ENCODE measurements at regions of chr1 and their contacts with region 1.

Region 1: GRCh38 chr1:204363335-204364124 is 3.8 kb upstream of the PLEKHA6 start:
- DNase-seq: peak; percentile 82
- H3K4me3 ChIP-seq: peak overlapping the region; percentile 69
- H3K27ac ChIP-seq: no peak overlapping the region
- H3K4me1 ChIP-seq: peaks cover 4% of the 10 kb centered on the region; the same call in 1 of the 2 replicates
- H3K27me3 ChIP-seq: no peaks in the 10 kb centered on the region

Region 2: GRCh38 chr1:203944651-203945404 is 418.7 kb before region 1 on chr1:
- in situ Hi-C with region 1: no loop called
- DNase-seq: no peak
- H3K4me3 ChIP-seq: no peak overlapping the region
- H3K27ac ChIP-seq: no peak overlapping the region
- H3K4me1 ChIP-seq: no peaks in the 10 kb centered on the region
- H3K27me3 ChIP-seq: peaks cover 6% of the 10 kb centered on the region; the same call in 1 of the 2 replicates

Region 3: GRCh38 chr1:204169858-204170257 is 193.7 kb before region 1 on chr1:
- in situ Hi-C with region 1: loop called (anchors 5 kb)
- DNase-seq: no peak
- H3K4me3 ChIP-seq: no peak overlapping the region
- H3K27ac ChIP-seq: no peak overlapping the region
- H3K4me1 ChIP-seq: peaks cover 16% of the 10 kb centered on the region
- H3K27me3 ChIP-seq: no peaks in the 10 kb centered on the region

Measured in GM23248 (cell line).